ENCODE measurements at regions of chr5 and their contacts with region 1.

Region 1: DNA sequence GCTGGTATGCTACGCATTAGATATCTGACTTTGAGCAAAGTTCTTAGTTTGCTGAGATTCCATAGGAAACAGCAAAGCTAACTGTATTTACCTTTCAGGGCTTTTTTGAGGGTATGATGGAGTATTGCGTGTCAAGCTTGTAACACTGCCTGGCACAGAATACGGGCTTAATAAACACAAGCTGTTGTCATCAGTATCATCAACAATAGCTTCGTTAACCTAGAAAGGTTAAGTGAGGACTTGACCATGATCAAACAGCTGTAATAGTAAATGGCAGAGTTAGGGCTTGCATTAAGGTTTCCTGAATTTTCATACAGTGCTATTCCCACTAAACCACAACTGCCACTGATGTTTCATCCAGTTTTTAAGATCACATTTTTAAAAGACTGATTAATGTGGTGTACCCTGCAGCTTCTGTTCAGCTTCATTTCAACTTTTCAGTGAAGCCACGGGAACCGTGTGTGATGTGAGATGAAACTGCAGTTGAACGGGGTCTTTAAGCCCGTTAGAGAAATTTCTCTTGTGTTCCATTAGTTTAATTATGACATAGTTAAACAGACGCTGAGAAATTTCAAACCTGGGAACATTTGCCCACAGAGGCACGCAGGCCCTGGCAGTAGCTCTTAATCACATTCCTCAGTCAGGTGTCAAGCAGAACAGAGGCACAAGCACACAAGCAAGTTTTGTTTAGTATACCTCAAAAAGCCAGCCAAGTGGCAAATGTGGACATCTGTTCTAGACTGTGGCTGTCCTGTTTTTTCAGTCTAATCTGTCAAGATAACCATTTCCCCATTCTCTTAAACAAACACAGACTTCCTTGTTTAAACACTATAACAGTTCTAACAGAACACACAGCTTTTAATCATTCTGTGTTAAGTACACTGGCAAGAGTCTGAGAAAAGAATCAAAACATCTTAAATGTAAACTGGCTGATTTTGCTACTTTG is 147.1 kb downstream of the ZNF608 start:
- DNase-seq: peak; percentile 96
- ATAC-seq: peak; percentile 94
- H3K4me3 ChIP-seq: peak overlapping the region in 2 of 3 experiments; percentile 9 to 29; a peak in 3 of 6 replicates
- H3K27ac ChIP-seq: peak overlapping the region; percentile 59
- H3K4me1 ChIP-seq: peaks cover 57% of the 10 kb centered on the region
- H3K27me3 ChIP-seq: no peaks in the 10 kb centered on the region
- CTCF ChIP-seq: no peak
- EP300 ChIP-seq: peak; percentile 65 to 95; a peak in 3 of 4 replicates
- POLR2A ChIP-seq: no peak
- RAD21 ChIP-seq: peak; percentile 29; the same call in 1 of the 2 replicates

Region 2: GRCh38 chr5:123835317-123835771 is 764.0 kb before region 1 on chr5:
- CTCF ChIA-PET with region 1: no interaction called
- POLR2A ChIA-PET with region 1: no interaction called
- in situ Hi-C with region 1: no loop called
- intact Hi-C with region 1: no loop called
- DNase-seq: no peak
- ATAC-seq: no peak
- H3K4me3 ChIP-seq: no peak overlapping the region
- H3K27ac ChIP-seq: no peak overlapping the region
- H3K4me1 ChIP-seq: no peaks in the 10 kb centered on the region
- H3K27me3 ChIP-seq: no peaks in the 10 kb centered on the region
- CTCF ChIP-seq: no peak
- EP300 ChIP-seq: no peak
- POLR2A ChIP-seq: no peak
- RAD21 ChIP-seq: no peak

Region 3: GRCh38 chr5:124524552-124525232 is 74.6 kb before region 1 on chr5:
- CTCF ChIA-PET with region 1: no interaction called
- POLR2A ChIA-PET with region 1: no interaction called
- in situ Hi-C with region 1: no loop called
- intact Hi-C with region 1: loop called (anchors 1 kb)
- DNase-seq: peak; percentile 31
- ATAC-seq: peak; percentile 77
- H3K4me3 ChIP-seq: no peak overlapping the region
- H3K27ac ChIP-seq: no peak overlapping the region
- H3K4me1 ChIP-seq: peaks cover 30% of the 10 kb centered on the region
- H3K27me3 ChIP-seq: peaks cover 0 to 3% of the 10 kb centered on the region in 2 experiments; a peak in 1 of 5 replicates
- CTCF ChIP-seq: peak; percentile 58
- EP300 ChIP-seq: no peak
- POLR2A ChIP-seq: no peak
- RAD21 ChIP-seq: peak; percentile 44; the same call in 1 of the 2 replicates

Region 4: DNA sequence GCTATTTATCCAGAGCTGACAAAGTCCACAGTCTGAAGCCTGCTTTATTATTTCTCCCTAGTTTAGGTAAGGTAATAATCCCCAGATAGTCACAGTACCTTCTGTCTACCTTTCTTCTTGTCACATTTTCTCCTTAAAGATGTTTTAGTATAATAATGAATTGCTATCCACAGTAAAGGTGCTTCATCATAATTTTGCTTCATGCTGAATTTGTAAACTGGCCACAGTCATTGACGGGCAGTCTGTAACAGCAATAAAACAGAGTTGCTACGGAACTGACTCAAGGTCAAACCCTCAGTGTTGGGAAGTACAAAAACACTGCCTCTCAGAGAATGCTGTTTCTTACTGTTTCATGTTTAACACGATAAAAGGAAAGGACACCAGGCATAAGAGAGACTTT is 48.6 kb before region 1 on chr5:
- CTCF ChIA-PET with region 1: no interaction called
- POLR2A ChIA-PET with region 1: no interaction called
- in situ Hi-C with region 1: no loop called
- intact Hi-C with region 1: loop called (anchors 1 kb)
- DNase-seq: peak; percentile 41
- ATAC-seq: peak; percentile 88
- H3K4me3 ChIP-seq: peak overlapping the region in 1 of 3 experiments; percentile 19; a peak in 1 of 6 replicates
- H3K27ac ChIP-seq: peak overlapping the region; percentile 19
- H3K4me1 ChIP-seq: peaks cover 45% of the 10 kb centered on the region
- H3K27me3 ChIP-seq: no peaks in the 10 kb centered on the region
- CTCF ChIP-seq: no peak
- EP300 ChIP-seq: no peak
- POLR2A ChIP-seq: no peak
- RAD21 ChIP-seq: no peak

Region 5: DNA sequence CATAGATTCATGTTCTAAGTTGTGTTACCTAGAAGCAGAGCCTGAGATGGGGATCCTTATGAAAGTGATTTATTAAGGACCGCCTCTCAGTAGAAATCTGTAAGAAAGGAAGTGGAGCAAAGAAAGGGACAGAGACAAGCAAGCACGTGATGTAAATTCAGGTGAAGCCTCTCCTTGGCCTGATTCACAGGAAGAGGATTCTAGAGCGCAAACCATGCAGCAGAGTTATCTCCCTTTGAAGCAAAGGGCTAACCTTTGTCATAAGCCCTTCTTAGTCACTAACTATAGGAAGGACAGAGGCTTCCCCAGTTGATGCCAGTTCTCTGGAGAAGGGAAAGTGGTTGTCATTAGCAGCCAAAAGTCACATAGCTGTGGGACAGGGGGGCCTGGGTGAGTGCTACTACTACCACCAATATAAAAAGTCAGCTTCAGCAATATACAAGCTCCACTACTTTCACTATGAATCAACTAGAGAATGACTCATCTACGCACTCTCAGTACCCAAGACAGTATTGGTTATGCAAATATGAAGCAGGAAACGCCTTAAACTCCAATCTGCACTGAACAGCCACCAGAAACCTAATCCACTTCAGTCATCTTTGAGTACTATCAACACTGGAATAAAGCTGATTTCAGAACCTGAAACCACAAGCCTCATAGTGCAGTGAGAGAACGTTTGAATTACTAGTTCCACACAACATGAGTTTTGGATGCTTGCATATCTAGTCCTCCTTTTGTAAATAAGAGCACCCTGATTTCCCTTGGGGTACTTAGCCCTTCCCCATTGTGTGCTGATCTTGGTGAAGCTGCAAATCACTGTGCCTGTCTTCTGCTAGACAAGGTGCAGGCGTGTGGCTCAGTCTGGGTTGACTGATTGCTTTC is 15.6 kb before region 1 on chr5:
- CTCF ChIA-PET with region 1: no interaction called
- POLR2A ChIA-PET with region 1: interaction called, 5 read pairs
- in situ Hi-C with region 1: no loop called
- intact Hi-C with region 1: loop called (anchors 1 kb)
- DNase-seq: peak; percentile 65
- ATAC-seq: no peak
- H3K4me3 ChIP-seq: no peak overlapping the region
- H3K27ac ChIP-seq: no peak overlapping the region
- H3K4me1 ChIP-seq: peaks cover 58% of the 10 kb centered on the region
- H3K27me3 ChIP-seq: no peaks in the 10 kb centered on the region
- CTCF ChIP-seq: no peak
- EP300 ChIP-seq: 0 out of 4 replicates have a peak, but pooled peaks of 1 of the 2 experiments have one; percentile 8
- POLR2A ChIP-seq: no peak
- RAD21 ChIP-seq: no peak

Region 6: GRCh38 chr5:124628721-124629596 is 29.7 kb after region 1 on chr5:
- CTCF ChIA-PET with region 1: no interaction called
- POLR2A ChIA-PET with region 1: interaction called, 17 read pairs
- in situ Hi-C with region 1: no loop called
- intact Hi-C with region 1: loop called (anchors 1 kb)
- DNase-seq: peak; percentile 84
- ATAC-seq: peak; percentile 98
- H3K4me3 ChIP-seq: peak overlapping the region in 2 of 3 experiments; percentile 12 to 58; a peak in 4 of 6 replicates
- H3K27ac ChIP-seq: no peak overlapping the region
- H3K4me1 ChIP-seq: peaks cover 45% of the 10 kb centered on the region
- H3K27me3 ChIP-seq: no peaks in the 10 kb centered on the region
- CTCF ChIP-seq: no peak
- EP300 ChIP-seq: peak in 1 of 2 experiments; percentile 45; a peak in 1 of 4 replicates
- POLR2A ChIP-seq: no peak
- RAD21 ChIP-seq: no peak

Region 7: DNA sequence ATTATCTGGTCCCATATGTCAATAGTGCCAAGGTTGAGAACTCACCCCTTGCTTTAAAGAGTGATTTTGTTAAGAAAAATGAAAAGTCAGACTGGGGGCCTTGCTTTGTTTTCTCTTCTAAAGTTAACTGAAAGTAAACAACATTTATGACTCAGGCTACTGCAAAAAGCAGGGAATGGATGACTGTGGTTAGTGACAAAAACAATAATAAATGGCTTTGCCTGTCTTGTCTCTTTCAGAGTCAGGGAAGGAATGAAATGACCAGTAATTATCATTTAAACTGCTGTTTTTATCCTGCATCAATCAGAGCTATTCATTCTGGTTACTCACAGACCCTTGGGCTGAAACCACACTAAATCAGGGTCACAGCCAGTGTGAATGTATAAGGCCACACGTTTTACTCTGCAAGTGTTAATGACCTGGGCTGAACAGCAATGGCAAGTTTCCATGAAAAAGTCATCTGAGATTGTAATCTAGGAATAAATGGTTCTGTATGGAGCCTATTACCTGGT is 35.0 kb after region 1 on chr5:
- CTCF ChIA-PET with region 1: no interaction called
- POLR2A ChIA-PET with region 1: interaction called, 17 read pairs
- in situ Hi-C with region 1: no loop called
- intact Hi-C with region 1: loop called (anchors 1 kb)
- DNase-seq: peak; percentile 79
- ATAC-seq: peak; percentile 45
- H3K4me3 ChIP-seq: no peak overlapping the region
- H3K27ac ChIP-seq: peak overlapping the region; percentile 36
- H3K4me1 ChIP-seq: peaks cover 54% of the 10 kb centered on the region
- H3K27me3 ChIP-seq: no peaks in the 10 kb centered on the region
- CTCF ChIP-seq: no peak
- EP300 ChIP-seq: peak in 1 of 2 experiments; percentile 83; a peak in 2 of 4 replicates
- POLR2A ChIP-seq: no peak
- RAD21 ChIP-seq: no peak

Region 8: GRCh38 chr5:124748687-124749594 is 149.6 kb after region 1 on chr5:
- CTCF ChIA-PET with region 1: no interaction called
- POLR2A ChIA-PET with region 1: interaction called, 11 read pairs
- in situ Hi-C with region 1: no loop called
- intact Hi-C with region 1: loop called (anchors 5 kb)
- DNase-seq: peak; percentile 81
- ATAC-seq: peak; percentile 93
- H3K4me3 ChIP-seq: peak overlapping the region; percentile 49 to 73 (median 68)
- H3K27ac ChIP-seq: peak overlapping the region; percentile 71
- H3K4me1 ChIP-seq: peaks cover 29% of the 10 kb centered on the region
- H3K27me3 ChIP-seq: peaks cover 0 to 27% of the 10 kb centered on the region in 2 experiments; a peak in 3 of 5 replicates
- CTCF ChIP-seq: no peak
- EP300 ChIP-seq: peak in 1 of 2 experiments; percentile 87; a peak in 2 of 4 replicates
- POLR2A ChIP-seq: peak in 1 of 2 experiments; percentile 11; a peak in 1 of 4 replicates
- RAD21 ChIP-seq: no peak

Region 9: DNA sequence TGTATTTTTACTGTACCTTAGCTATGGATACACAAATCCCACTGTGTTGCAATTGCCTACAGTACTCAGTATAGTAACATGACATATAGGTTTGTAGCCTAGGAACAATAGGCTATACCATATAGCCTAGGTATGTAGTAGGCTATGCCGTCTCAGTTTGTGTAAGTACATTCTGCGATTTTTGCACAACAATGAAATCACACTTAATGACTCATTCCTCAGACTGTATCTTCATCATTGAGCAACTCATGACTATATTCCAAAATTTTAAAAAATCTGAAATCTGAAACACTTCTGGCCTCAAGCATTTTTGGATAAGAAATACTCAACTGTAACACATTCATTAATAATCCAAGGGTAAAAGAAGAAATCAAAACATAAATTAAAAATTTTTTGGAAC is 1157.2 kb after region 1 on chr5:
- CTCF ChIA-PET with region 1: no interaction called
- POLR2A ChIA-PET with region 1: no interaction called
- in situ Hi-C with region 1: no loop called
- intact Hi-C with region 1: no loop called
- DNase-seq: no peak
- ATAC-seq: no peak
- H3K4me3 ChIP-seq: no peak overlapping the region
- H3K27ac ChIP-seq: no peak overlapping the region
- H3K4me1 ChIP-seq: no peaks in the 10 kb centered on the region
- H3K27me3 ChIP-seq: no peaks in the 10 kb centered on the region
- CTCF ChIP-seq: no peak
- EP300 ChIP-seq: no peak
- POLR2A ChIP-seq: no peak
- RAD21 ChIP-seq: no peak

Measured in HepG2 (cell line).